Colonic mucosa (tissue), 4 donors: ENCODE measurements at regions of chr15 and their contacts with region 1.

Region 1: GRCh38 chr15:73569370-73569769 is 63.8 kb downstream of the NPTN start:
- DNase-seq: no peak
- H3K4me3 ChIP-seq: no peak overlapping the region
- H3K27ac ChIP-seq: no peak overlapping the region
- H3K4me1 ChIP-seq: peaks cover 10% of the 10 kb centered on the region
- H3K27me3 ChIP-seq: no peaks in the 10 kb centered on the region
- CTCF ChIP-seq: no peak

Region 2: DNA sequence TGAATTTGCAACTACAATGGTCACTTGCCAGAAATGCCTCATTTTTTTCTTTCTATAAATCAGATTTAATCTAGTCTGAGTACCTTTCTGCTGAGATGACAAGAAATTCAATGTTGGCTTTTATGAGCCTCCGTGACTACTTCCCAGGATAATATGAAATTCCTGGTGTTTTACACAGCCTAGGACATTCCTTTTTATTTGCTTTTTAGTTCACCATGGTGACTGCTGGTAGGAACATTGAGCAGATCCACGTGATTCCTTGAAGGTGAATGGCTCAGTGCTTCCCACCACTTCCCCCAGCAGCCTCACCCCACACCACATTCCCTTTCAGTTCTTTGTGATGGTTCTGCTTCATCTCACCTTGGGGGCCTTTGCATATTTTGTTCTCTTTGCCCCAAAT is 68.2 kb after region 1 on chr15:
- intact Hi-C with region 1: loop called (anchors 5 kb)
- DNase-seq: no peak
- H3K4me3 ChIP-seq: no peak overlapping the region
- H3K27ac ChIP-seq: no peak overlapping the region
- H3K4me1 ChIP-seq: peaks cover 4% of the 10 kb centered on the region
- H3K27me3 ChIP-seq: no peaks in the 10 kb centered on the region
- CTCF ChIP-seq: no peak

Region 3: DNA sequence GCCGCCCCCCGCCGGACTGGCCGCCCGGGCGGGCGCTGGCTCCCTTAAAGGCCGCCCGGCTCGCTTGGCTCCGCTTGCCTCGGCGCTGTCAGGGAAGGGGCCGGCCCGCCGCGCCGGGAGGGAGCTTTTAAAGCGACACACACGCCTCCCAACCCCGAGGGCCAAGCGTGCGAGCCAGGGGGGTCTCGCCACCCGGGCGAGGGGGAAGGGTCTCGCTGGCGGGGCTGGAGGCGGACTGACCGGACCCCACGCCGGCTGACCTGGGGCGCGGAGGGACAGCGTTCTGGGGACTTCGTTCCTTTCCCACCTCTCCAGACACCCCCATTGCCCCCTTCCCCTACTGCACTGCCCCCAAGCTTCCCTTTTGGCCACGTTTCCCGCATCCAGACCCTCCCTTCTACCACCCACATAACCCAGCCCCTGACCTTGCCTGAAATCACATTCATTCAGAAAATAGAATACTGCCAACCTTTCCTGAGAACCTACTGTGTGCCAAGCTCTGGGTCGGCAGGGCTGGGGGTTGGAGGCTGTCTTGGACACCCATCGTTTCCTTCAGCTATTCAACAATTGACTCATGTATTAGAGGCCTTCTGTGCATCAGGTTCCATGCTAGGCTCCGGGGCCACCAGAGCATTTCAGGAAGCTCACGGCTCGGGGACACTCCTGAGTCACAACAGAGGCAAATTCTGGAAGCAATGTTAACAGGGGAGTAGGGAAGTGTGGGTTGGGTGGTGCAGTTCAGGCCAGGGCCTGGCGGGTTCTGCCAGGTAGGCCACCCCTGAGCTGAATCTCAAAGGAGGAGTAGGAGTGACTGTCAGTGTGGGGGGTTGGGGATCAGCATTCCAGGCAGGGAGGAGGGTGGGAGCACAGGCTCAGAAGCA is 184.1 kb after region 1 on chr15 and contains the start of gene INSYN1:
- intact Hi-C with region 1: no loop called
- DNase-seq: no peak
- H3K4me3 ChIP-seq: peak within 1 kb of the TSS; percentile 42
- H3K27ac ChIP-seq: no peak within 1 kb of the TSS
- H3K4me1 ChIP-seq: no peaks in the 10 kb centered on the region
- H3K27me3 ChIP-seq: peaks cover 36% of the 10 kb centered on the region
- CTCF ChIP-seq: no peak
- total RNA-seq, gene INSYN1: 0.32 to 0.58 TPM